ENCODE measurements at regions of chr3 and their contacts with region 1.

Region 1: GRCh38 chr3:151171145-151171757 is 31.8 kb downstream of the GPR171 start:
- DNase-seq: no peak
- ATAC-seq: peak; percentile 70

Region 2: DNA sequence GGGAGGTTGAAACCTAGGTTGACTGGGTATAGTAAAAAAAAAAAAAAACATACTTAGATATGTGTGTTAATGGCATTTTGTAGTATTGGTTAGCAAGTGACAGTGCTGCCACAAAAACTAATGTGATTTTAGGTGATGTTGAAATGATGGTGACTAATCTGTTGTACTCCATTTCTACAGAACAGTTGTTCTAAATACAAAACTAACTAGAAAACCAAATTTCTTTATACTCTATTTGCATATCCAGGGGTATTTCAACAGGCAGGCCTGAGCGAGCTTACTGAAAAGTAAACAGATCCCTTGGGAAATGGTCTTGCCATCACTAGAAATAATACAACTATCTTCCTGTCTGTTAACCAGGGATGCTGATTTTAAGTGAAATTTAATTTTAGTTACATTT is 742.7 kb before region 1 on chr3:
- intact Hi-C with region 1: no loop called
- DNase-seq: no peak
- ATAC-seq: no peak

Region 3: DNA sequence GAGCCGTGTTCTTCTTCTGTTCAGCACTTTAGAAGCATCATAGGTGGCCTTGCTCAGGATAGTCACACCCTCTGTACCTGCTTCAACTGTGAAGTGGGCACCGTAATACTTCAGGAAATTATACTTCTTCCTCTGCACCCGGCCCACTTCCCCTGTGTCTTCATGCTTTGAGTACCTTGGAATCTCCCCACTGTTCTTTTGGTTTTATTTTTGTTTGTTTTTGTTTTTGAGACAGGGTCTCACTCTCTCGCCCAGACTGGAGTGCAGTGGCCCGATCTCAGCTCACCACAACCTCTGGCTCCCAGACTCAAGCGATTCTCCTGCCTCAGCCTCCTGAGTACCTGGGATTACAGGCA is 105.4 kb after region 1 on chr3:
- intact Hi-C with region 1: loop called (anchors 10 kb)
- DNase-seq: no peak
- ATAC-seq: peak; percentile 20

Region 4: GRCh38 chr3:151421938-151422337 is 250.7 kb after region 1 on chr3:
- intact Hi-C with region 1: no loop called
- DNase-seq: no peak
- ATAC-seq: no peak

Measured in sciatic nerve (tissue), 2 donors.